A673 (cell line): ENCODE measurements at regions of chr17 and their contacts with region 1.

Region 1: DNA sequence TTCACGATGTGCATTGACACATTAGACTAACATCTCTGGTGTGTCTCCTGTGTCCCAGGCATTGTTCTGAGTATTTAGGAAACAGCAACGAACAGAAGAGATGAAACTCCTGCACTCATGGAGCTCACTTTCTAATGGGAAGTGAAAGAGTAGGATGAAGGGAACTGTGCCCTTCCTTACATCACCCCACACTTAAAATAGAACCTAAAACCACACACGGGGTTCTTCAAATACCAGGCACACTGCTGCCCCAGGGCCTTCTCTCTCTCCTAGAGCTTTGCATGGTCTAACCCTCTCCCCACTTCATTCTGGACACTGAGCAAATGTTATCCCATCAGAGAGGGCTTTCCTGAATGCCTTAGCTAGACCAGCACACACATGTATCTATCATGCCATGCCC is 33.7 kb downstream of the TRIM25 start:
- DNase-seq: no peak
- H3K4me3 ChIP-seq: no peak overlapping the region
- H3K27ac ChIP-seq: no peak overlapping the region
- H3K4me1 ChIP-seq: no peaks in the 10 kb centered on the region
- H3K27me3 ChIP-seq: no peaks in the 10 kb centered on the region
- CTCF ChIP-seq: no peak

Region 2: DNA sequence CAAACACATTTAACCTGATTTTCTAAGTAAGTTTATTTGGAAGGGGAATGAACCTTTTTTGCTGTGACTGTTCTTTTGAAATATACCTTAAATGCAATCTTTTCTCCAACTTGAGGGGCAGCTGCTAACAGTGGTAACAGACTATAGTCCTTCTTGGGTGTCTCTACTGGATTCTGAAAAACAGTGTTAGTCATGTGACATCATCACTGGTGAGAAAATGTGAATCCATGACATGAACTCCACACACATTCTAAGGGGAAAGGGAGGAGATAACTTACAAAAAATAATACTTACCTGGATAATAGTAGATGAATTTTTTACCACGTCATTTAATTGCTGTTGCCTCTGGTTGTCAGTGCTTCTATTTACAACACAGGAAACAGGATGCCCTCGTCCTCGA is 69.5 kb after region 1 on chr17:
- CTCF ChIA-PET with region 1: no interaction called
- POLR2A ChIA-PET with region 1: interaction called, 32 read pairs
- intact Hi-C with region 1: no loop called
- DNase-seq: no peak
- H3K4me3 ChIP-seq: no peak overlapping the region
- H3K27ac ChIP-seq: no peak overlapping the region
- H3K4me1 ChIP-seq: no peaks in the 10 kb centered on the region
- H3K27me3 ChIP-seq: no peaks in the 10 kb centered on the region
- CTCF ChIP-seq: no peak